CD8-positive, alpha-beta T cell (primary cell): ENCODE measurements at regions of chr18 and their contacts with region 1.

Region 1: DNA sequence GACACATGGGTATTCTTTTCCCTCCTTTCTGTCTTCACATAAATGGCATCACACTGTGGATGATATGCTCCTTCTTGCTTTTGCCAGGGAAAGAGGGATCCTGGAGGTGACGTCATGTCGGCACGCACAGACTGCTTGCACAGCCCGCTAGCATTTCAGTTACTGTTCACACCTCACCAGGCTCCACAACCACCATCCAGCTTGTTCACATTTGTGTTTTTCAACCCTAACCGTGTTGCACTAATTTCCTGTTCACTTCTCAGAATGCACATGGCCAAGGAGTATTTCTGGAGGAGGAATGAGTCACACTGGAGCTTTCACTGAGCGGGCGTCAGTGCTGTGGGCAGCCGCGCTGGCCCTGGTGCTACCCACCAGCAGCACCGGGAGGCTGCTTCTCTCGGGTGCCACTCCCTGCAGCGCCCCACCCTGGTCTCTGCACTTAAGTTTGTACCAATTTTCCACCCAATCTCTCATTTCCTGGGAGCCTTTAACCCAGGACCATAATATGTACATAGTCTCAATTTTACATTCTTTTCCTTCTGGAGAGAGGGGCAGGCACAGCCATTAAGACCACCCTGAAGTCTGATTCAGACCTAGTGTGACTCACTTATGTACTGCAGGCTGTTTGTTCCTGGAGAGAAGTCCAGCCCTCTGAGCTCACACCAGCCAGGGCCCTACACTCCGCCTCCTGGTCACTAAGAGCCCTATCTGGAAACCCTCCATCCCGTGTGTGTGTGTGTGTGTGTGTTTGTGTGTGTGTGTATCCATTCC is 65.1 kb downstream of the MBP start:
- DNase-seq: peak in 8 of 9 experiments; percentile 48 to 90 (median 74)
- ATAC-seq: peak; percentile 20
- H3K4me3 ChIP-seq: peak overlapping the region in 1 of 2 experiments; percentile 9
- H3K4me3 Mint-ChIP-seq: peak overlapping the region; percentile 66
- H3K27ac ChIP-seq: peak overlapping the region; percentile 58 to 87
- H3K27ac Mint-ChIP-seq: peak overlapping the region; percentile 97
- H3K4me1 ChIP-seq: peaks cover 99% of the 10 kb centered on the region
- H3K4me1 Mint-ChIP-seq: peaks cover 94% of the 10 kb centered on the region
- H3K27me3 ChIP-seq: no peaks in the 10 kb centered on the region
- H3K27me3 Mint-ChIP-seq: no peaks in the 10 kb centered on the region
- CTCF ChIP-seq: no peak

Region 2: DNA sequence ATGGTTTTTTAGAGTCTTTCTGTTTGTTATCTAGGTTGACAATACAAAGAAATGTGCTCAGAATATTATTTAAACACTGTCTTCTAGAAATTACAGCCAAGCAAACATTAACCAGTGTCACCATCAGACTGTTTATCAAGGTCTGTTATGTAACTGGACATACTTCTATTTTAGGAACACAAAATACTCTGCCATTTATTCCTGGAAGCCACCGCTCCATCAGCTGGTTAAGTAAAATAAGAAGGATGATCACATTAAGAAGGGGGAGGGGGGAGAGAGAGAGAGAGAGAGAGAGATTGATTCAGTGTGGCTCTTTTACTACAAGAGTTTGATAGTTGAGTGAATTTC is 17.2 kb after region 1 on chr18:
- CTCF ChIA-PET with region 1: interaction called, 3 read pairs
- POLR2A ChIA-PET with region 1: interaction called, 4 read pairs
- intact Hi-C with region 1: loop called in 1 of 2 experiments (anchors 2 kb)
- DNase-seq: no peak
- ATAC-seq: no peak
- H3K4me3 ChIP-seq: no peak overlapping the region
- H3K4me3 Mint-ChIP-seq: peak overlapping the region; percentile 30
- H3K27ac ChIP-seq: peak overlapping the region in 1 of 2 experiments; percentile 76
- H3K27ac Mint-ChIP-seq: peak overlapping the region; percentile 83
- H3K4me1 ChIP-seq: peaks cover 55% of the 10 kb centered on the region
- H3K4me1 Mint-ChIP-seq: peaks cover 74% of the 10 kb centered on the region
- H3K27me3 ChIP-seq: no peaks in the 10 kb centered on the region
- H3K27me3 Mint-ChIP-seq: no peaks in the 10 kb centered on the region
- CTCF ChIP-seq: no peak

Region 3: DNA sequence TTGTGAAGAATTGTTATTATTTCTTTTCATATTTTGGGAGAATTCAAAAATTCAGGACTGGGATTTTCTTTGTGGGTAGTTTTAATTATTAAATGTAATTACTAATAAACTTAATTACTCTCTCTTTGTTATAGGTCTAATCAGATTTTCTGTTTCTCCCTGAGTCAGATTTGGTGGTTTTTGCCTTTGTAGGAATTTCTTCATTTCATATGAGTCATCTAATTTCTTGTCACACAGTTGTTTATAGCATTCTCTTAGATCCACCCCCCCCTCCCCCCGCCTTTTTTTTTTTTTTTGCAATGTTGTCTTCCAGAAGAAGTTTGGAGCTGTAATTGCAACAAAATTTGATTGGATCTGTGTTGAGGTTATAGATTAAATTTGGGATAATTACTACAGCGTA is 156.2 kb after region 1 on chr18:
- CTCF ChIA-PET with region 1: no interaction called
- POLR2A ChIA-PET with region 1: no interaction called
- intact Hi-C with region 1: no loop called
- DNase-seq: no peak
- ATAC-seq: no peak
- H3K4me3 ChIP-seq: no peak overlapping the region
- H3K4me3 Mint-ChIP-seq: no peak overlapping the region
- H3K27ac ChIP-seq: no peak overlapping the region
- H3K27ac Mint-ChIP-seq: no peak overlapping the region
- H3K4me1 ChIP-seq: peaks cover under 1% of the 10 kb centered on the region
- H3K4me1 Mint-ChIP-seq: peaks cover 6% of the 10 kb centered on the region
- H3K27me3 ChIP-seq: no peaks in the 10 kb centered on the region
- H3K27me3 Mint-ChIP-seq: peaks cover 6% of the 10 kb centered on the region
- CTCF ChIP-seq: no peak